ENCODE measurements at regions of chr7 and their contacts with region 1.

Region 1: GRCh38 chr7:157024716-157025115 is 14.3 kb upstream of the MNX1 start:
- DNase-seq: no peak
- H3K4me3 ChIP-seq: no peak overlapping the region
- H3K4me3 Mint-ChIP-seq: no peak overlapping the region
- H3K27ac ChIP-seq: no peak overlapping the region
- H3K27ac Mint-ChIP-seq: no peak overlapping the region
- H3K4me1 ChIP-seq: no peaks in the 10 kb centered on the region
- H3K4me1 Mint-ChIP-seq: peaks cover 0 to 14% (median 5%) of the 10 kb centered on the region in 3 donors
- H3K27me3 ChIP-seq: peaks cover 38% of the 10 kb centered on the region
- H3K27me3 Mint-ChIP-seq: peaks cover 52 to 81% of the 10 kb centered on the region in 2 donors

Region 2: GRCh38 chr7:156949541-156950380 is 75.0 kb before region 1 on chr7 and contains the start of gene NOM1:
- CTCF ChIA-PET with region 1: no interaction called
- POLR2A ChIA-PET with region 1: no interaction called
- DNase-seq: peak; percentile 86 to 92 (median 87)
- H3K4me3 ChIP-seq: peak within 1 kb of the TSS; percentile 72
- H3K4me3 Mint-ChIP-seq: peak within 1 kb of the TSS; percentile 87 to 98 (median 93)
- H3K27ac ChIP-seq: peak within 1 kb of the TSS; percentile 69
- H3K27ac Mint-ChIP-seq: peak within 1 kb of the TSS in 7 of 8 donors; percentile 66 to 96 (median 86)
- H3K4me1 ChIP-seq: peaks cover 21% of the 10 kb centered on the region
- H3K4me1 Mint-ChIP-seq: peaks cover 23 to 36% (median 26%) of the 10 kb centered on the region in 3 donors
- H3K27me3 ChIP-seq: no peaks in the 10 kb centered on the region
- H3K27me3 Mint-ChIP-seq: peaks cover 10 to 20% of the 10 kb centered on the region in 2 donors
- total RNA-seq, gene NOM1: 34.2 to 34.3 TPM

Region 3: GRCh38 chr7:157138424-157139110 is 113.9 kb after region 1 on chr7 and contains the start of gene UBE3C:
- CTCF ChIA-PET with region 1: no interaction called
- POLR2A ChIA-PET with region 1: interaction called, 12 read pairs
- DNase-seq: peak; percentile 87 to 94 (median 93)
- H3K4me3 ChIP-seq: peak within 1 kb of the TSS; percentile 72
- H3K4me3 Mint-ChIP-seq: peak within 1 kb of the TSS; percentile 83 to 94 (median 87)
- H3K27ac ChIP-seq: peak within 1 kb of the TSS; percentile 74
- H3K27ac Mint-ChIP-seq: peak within 1 kb of the TSS; percentile 92 to 98 (median 95)
- H3K4me1 ChIP-seq: peaks cover 41% of the 10 kb centered on the region
- H3K4me1 Mint-ChIP-seq: peaks cover 35 to 48% (median 44%) of the 10 kb centered on the region in 3 donors
- H3K27me3 ChIP-seq: no peaks in the 10 kb centered on the region
- H3K27me3 Mint-ChIP-seq: peaks cover 0 to 1% of the 10 kb centered on the region in 2 donors
- total RNA-seq, gene UBE3C: 81.1 to 82.7 TPM